Right ventricle myocardium superior (tissue), 1 donor: ENCODE measurements at regions of chr12 and their contacts with region 1.

Region 1: DNA sequence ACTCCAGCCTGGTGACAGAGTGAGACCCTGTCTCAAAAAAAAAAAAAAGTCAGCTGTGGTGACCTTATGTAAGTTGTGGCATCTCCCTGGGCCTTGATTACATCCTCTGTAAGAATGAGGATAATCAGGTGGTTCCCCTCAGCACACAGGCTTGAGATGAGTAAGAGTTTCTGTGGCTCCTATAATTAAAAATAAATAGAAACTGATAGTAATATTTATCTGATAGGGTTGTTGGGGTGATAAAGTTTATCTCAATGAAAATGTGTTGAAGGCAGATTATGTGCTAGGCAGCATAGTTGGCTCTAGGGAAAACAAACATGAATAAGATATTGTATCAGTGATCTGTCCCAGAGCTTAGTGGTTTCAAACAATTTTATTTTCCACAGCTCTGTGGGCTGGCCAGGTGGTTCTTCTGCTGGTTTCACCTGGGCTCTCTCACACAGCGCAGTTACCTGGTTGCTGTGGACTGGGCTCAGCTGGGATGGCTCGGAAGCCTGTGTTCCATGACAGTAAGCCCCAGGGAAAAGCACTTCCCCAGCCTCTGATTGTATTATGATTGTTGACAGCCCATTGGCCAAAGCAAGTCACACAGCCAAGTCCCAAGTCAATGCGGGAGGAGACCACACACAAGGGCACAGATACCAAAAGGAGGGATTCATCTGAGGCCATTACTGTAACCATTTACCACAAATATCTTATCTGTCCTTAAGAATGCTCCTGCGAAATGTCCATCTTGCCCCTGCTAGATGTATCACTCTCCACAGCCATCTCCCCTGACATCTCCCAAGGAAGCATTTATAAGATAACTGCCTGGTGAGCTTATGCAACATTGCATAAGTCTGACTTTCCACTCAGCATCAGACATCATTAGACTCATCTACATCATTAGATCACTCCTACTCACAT is 151.7 kb downstream of the NUAK1 start:
- DNase-seq: no peak
- ATAC-seq: no peak

Region 2: GRCh38 chr12:105235732-105236476 is 751.1 kb before region 1 on chr12 and contains the start of gene APPL2:
- intact Hi-C with region 1: no loop called
- DNase-seq: peak; percentile 95
- ATAC-seq: peak; percentile 95
- total RNA-seq, gene APPL2: 21.6 TPM

Region 3: GRCh38 chr12:105698075-105698474 is 289.0 kb before region 1 on chr12:
- intact Hi-C with region 1: no loop called
- DNase-seq: no peak
- ATAC-seq: no peak

Region 4: GRCh38 chr12:106123551-106124081 is 136.6 kb after region 1 on chr12:
- intact Hi-C with region 1: loop called (anchors 10 kb)
- DNase-seq: peak; percentile 75
- ATAC-seq: peak; percentile 82